ENCODE measurements at regions of chr1 and their contacts with region 1.

Region 1: GRCh38 chr1:153990468-153991150 is at the start of gene RPS27:
- DNase-seq: peak; percentile 98

Region 2: DNA sequence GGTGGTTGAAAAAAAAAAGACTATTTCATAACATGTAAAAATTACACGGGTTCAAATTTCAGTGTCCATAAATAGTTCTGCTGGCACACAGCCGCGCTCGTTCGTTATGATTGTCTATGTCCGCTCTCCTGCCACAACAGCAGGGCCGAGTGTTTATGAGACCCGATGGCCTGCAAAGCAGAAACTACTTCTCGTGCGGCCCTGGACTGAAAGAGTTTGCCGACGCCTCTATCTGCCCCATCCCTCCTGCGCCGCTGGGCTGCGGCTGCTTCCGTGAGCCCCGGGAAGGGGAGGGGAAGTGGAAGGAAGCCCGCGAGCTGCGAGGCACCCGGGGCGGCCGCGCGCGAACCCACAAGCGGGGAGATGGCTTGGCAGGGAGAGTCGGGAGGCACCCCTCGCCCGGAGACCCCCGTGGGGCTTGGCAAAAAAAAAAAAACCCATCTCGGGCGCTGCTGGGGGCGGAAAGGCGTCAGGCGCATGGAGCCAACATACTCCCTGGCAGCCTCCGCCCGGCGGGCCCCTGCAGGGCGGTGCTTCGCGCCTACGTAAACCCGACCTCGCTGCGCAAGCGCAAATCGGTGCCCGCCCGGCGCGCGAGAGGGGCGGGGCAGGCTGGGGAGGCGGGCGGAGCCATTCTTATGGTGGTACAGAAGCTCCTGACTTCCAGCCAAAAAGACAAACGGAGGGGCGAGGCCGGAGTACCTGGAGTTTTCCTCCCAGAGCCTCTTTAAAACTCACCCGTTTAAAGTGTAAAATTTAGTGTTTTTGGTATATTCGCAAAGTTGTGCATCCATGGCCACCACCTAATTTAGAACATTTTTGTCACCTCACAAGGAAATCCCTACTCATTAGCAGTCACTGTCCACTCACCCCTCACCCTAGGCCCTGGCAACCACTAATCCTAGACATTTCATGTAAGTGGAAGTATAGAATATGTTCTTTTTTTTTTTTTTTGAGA is 207.1 kb before region 1 on chr1:
- CTCF ChIA-PET with region 1: interaction called, 3 read pairs
- POLR2A ChIA-PET with region 1: interaction called, 27 read pairs
- DNase-seq: peak; percentile 99

Region 3: DNA sequence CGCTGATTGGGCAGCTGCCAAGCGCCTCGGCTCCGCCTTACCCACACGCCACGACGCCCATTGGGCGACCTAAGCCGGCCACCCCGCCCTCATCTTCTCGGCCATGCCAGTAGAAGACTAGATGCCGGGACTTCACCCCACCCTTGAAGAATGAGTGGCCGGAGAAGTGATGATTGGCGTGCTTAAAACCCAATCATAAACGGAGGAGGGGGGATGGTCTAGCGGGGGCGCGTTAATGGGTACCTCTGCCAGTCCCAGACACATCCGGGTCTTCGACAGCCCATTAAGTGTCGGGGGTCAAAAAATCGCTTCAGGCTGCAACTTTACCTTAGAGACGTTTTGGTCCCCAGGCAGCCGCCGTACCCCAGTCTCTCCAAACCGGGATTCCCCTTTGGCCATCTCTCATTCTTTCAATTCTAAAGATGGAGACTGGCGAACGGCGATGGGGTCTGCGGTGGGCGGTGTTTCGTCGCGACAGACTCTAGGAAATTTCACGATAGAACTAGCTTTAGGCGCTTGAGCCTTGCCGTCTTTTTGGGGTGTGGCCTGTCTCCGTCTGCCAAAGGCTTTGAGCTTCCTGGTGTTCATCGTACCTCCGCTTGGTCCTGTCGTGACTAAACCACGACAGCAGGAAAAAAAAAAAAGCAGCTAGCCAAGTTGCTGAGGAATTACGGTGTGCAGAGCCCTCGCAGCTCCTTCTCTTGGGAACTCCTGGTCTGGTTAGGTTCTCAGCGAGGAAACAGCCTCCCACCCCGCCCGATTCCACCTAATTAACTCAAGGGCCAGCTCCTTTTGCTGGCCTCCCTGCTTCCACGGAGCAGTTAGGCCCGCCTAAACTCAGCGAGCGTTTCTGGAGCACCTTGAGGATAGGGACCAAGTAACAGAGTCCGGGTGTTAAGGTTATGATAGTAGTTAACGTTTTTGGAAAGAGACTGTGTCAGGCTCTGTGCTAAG is 67.4 kb before region 1 on chr1 and contains the start of gene GATAD2B:
- CTCF ChIA-PET with region 1: interaction called, 4 read pairs
- POLR2A ChIA-PET with region 1: interaction called, 13 read pairs
- DNase-seq: peak; percentile 99

Region 4: DNA sequence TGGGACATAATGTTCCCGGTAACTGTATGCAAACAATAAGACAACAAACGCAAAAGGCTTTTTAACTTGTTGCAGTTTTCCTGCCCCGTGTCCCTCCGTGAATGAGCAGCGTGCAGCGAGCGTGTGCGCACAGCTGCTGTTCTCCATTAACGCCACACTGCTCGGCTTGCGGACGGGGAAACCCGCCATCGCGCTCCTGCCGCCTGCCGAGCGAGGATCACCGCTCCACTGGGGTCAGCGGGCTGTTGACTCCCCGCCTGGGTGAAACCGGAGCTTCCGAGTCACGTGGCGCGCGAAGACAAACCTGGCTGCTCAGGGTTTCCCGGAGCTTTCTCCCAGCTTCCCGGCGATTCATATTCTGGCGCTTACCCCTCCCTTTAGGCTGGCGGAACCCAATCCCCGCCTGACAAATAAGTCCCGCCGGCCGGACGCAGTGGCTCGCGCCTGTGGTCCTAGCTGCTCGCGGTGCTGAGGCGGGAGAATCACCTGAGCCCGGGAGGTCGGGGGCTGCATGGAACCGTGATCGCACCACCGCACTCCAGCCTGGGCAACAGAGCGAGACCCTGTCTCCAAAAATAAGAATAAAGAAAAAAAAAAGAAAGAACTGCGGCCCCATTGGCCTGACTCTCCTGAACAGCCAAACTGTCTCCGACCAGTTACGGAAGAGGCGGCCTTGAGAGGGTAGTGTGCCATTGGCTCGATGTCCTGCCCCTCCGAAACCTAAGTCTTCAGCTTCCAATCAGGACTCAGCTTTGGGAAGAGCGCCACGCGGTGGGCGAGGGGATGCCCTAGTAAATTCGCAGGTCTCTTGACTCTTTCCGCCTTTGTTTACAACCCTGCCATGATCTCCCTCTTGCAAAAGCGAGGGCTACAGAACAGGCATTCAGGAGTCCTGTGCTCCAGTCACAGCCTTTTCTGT is 23.3 kb before region 1 on chr1 and contains the start of gene CREB3L4:
- CTCF ChIA-PET with region 1: interaction called, 14 read pairs
- POLR2A ChIA-PET with region 1: interaction called, 69 read pairs
- DNase-seq: peak; percentile 91

Region 5: DNA sequence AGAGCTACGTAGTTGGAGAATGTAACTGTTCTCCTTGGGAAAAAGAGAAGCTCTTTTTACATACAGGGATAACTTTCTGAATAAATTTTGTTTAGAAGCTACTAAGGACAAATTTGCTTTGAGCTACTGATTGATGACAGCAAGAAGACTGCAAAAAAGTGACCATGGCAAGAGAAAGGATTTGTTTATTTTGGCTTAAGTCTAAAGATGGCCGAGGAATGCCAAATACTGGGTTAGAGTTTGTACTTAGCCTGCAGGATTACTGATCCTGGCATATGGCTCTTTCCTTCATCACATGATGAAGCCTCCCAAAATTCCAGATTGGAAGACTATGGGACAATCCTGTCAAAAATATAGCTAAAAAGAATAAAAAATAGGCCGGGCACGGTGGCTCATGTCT is 28.7 kb after region 1 on chr1:
- CTCF ChIA-PET with region 1: no interaction called
- POLR2A ChIA-PET with region 1: interaction called, 19 read pairs
- DNase-seq: no peak

Measured in HEK293T (cell line).